HEK293 (cell line): ENCODE measurements at regions of chr1 and their contacts with region 1.

Region 1: DNA sequence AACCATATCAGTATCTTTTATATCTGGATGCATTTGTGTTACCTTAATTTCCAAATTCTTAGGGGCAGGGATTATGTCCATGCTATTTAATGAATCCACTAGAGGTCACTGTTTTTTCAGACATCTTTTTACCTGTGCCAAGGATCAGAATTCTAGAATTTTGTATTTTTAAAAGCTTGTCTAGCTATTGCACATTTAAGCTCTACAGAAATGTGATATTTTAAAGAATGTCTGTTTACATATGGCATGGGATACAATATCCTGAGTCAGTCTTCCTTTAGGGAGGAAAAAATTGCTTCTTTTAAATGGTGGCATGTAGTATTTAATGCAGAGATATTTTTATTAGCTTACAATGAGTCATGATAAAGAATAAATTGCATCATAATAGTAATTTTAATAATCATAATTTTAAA is 11.3 kb downstream of the RPAP2 start:
- H3K4me3 ChIP-seq: no peak overlapping the region
- H3K27ac ChIP-seq: no peak overlapping the region
- H3K4me1 ChIP-seq: no peaks in the 10 kb centered on the region
- CTCF ChIP-seq: no peak

Region 2: DNA sequence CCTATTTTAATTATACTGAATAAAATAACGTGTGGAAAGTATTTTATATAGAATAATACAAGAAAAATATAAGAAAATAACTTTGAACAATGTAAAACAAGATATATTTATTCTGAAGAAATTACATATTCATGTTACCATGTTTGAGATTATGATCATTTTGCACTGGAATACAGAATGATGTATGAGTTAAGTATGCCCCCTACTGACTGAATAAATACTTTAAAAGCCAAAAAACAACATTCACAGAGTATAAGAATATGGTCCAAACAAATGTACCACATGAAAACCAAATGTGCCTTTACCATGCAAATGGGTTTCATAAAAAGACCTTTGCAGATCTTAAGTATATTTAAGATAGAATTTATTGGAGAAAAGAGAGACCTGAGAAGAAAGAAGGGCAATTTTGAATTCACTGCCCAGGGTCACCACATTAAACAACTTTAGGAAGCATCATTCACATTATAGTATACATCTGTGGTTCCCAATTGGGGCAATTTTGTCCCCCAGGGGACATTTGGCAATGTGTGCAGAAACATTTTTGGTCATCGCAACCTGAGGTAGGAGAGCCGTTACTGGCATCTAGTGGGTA is 313.1 kb after region 1 on chr1:
- CTCF ChIA-PET with region 1: interaction called, 10 read pairs
- POLR2A ChIA-PET with region 1: no interaction called
- H3K4me3 ChIP-seq: no peak overlapping the region
- H3K27ac ChIP-seq: no peak overlapping the region
- H3K4me1 ChIP-seq: no peaks in the 10 kb centered on the region
- CTCF ChIP-seq: no peak